Activated T-helper 2 cell treated with anti-CD3 and anti-CD28 coated beads, Interferon-gamma antibody, Interleukin-2, Interleukin-4, amounts not matched to agents 10 μg/mL and 5 μg/mL and 100 μg/mL, durations not matched to agents 14 hours and 24 hours and 36 hours (primary cell): ENCODE measurements at regions of chr2 and their contacts with region 1.

Region 1: DNA sequence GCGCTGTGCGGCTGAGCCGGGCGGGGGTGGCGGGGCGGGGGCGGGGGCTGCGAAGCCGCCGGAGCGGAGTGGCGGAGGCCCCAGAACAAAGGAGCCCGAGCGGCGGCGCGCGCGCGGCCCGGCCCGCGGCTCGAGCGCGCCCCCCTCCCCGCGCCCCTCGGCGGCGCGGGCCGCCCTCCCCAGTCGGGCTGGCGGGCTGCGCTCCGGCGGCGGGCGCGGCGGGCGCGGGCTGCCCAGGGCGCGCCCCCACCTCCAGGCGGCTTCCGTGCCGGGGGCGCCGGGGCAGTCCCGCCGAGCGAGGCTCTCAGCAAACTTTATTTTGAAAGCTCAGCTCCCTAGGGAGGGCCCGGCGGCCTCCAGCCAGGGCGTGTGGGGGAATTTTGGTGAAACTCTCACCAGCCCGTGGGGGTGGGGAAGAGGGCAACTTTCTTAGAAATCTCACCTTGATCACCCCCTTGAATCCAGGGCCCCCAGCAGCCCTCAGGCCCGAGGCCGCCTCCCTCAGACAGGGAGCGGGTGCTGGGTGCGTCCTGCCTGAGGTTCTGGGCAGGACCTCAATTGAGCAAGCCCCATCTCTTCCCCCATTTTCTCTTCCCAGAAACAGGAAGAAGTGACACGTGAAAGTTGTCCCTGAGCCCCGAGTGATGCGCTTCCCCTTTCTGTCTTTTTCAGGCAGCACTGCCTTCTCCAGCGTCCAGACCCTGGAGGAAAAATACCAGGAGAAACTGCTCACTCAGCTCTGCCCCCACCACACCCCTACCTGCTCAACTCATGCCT is 786 bp downstream of the TET3 start:
- DNase-seq: peak; percentile 40
- H3K4me3 Mint-ChIP-seq: peak overlapping the region; percentile 86
- H3K27ac Mint-ChIP-seq: peak overlapping the region; percentile 80
- H3K4me1 Mint-ChIP-seq: peaks cover 64% of the 10 kb centered on the region
- H3K27me3 Mint-ChIP-seq: no peaks in the 10 kb centered on the region

Region 2: GRCh38 chr2:73931531-73932500 is 53.7 kb before region 1 on chr2:
- intact Hi-C with region 1: loop called (anchors 2 kb)
- DNase-seq: no peak
- H3K4me3 Mint-ChIP-seq: peak overlapping the region; percentile 17
- H3K27ac Mint-ChIP-seq: peak overlapping the region; percentile 81
- H3K4me1 Mint-ChIP-seq: peaks cover 65% of the 10 kb centered on the region
- H3K27me3 Mint-ChIP-seq: no peaks in the 10 kb centered on the region

Region 3: DNA sequence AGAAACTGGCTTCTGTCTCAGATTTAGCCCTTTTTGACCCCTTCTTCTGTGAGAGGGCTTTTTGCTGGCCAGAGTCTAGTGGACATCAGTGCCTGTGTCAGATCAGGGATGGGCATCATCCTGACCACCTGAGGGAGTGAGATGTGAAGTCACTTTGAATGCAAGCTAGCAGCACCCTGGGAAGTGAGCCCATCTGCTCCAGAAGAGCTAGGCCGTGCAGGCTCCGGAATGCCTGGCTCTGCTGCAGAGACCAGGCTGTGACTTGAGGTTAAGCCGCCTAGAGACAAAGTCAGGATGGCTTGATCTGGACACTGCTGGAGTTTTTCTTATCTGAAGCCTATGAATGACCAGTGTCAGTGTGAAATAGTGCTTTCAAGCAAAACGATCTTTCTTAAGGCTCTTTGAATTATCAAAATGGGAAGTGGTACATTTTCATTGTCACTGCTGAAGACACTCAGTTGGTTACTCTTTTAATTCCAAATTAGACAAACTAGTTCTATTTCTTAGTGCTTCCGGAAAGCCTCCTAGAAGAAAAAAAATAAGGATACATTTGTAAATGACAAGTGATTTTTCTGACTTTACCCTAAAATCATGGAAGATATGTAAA is 38.0 kb before region 1 on chr2:
- intact Hi-C with region 1: no loop called
- DNase-seq: no peak
- H3K4me3 Mint-ChIP-seq: no peak overlapping the region
- H3K27ac Mint-ChIP-seq: no peak overlapping the region
- H3K4me1 Mint-ChIP-seq: peaks cover 78% of the 10 kb centered on the region
- H3K27me3 Mint-ChIP-seq: no peaks in the 10 kb centered on the region

Region 4: GRCh38 chr2:73963385-73964120 is 21.9 kb before region 1 on chr2:
- intact Hi-C with region 1: loop called (anchors 1 kb)
- DNase-seq: peak; percentile 20
- H3K4me3 Mint-ChIP-seq: peak overlapping the region; percentile 27
- H3K27ac Mint-ChIP-seq: peak overlapping the region; percentile 88
- H3K4me1 Mint-ChIP-seq: peaks cover 43% of the 10 kb centered on the region
- H3K27me3 Mint-ChIP-seq: no peaks in the 10 kb centered on the region

Region 5: GRCh38 chr2:74031221-74031620 is 45.7 kb after region 1 on chr2:
- intact Hi-C with region 1: loop called (anchors 5 kb)
- DNase-seq: no peak
- H3K4me3 Mint-ChIP-seq: peak overlapping the region; percentile 42
- H3K27ac Mint-ChIP-seq: peak overlapping the region; percentile 63
- H3K4me1 Mint-ChIP-seq: peaks cover 63% of the 10 kb centered on the region
- H3K27me3 Mint-ChIP-seq: no peaks in the 10 kb centered on the region

Region 6: GRCh38 chr2:74226648-74227213 is 241.2 kb after region 1 on chr2:
- intact Hi-C with region 1: no loop called
- DNase-seq: no peak
- H3K4me3 Mint-ChIP-seq: no peak overlapping the region
- H3K27ac Mint-ChIP-seq: no peak overlapping the region
- H3K4me1 Mint-ChIP-seq: peaks cover 3% of the 10 kb centered on the region
- H3K27me3 Mint-ChIP-seq: no peaks in the 10 kb centered on the region